Cardiac septum (tissue), 1 donor: ENCODE measurements at regions of chr6 and their contacts with region 1.

Region 1: DNA sequence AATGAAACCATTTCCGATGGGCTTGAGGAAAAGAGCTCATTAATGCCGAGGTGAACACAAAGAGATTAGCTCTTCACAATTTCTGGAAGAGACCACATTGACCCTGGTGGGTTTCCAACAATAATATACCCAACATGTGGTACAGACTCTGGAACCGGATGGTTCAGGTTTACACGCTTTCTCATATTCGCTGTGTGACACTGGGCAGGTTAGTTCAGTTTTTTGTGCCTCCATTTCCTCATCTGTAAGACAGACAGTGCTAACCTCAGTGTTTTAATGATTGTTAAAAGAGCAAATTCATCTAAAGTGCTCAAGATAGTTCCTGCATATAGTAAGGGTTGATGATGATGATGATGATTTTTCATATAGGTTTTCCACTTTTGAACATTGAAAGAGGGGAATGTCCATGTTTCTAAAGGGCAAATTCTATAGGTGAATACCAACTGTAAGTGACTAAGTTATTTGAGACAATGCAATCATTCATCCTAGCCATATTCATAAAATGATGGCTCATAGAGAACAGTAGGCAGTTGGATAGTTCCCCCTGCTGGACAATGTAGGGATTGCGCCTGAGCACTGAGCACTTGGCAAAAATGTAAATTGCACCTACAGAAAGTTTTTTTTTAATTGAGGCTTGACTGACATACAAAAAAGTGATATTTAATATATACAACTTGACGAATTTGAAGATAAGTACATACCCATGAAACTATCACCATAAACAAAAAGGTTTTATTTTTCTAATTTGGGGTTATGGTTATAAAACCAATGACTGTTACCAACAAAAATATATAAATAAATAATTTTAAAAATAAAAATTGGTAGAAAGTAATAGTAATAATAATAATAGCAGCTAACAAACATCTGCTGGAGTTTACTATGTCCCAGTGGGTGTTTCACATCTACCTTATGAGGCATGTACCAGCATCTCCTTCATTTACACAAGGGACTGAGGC is 2.1 kb upstream of the PERP start:
- DNase-seq: no peak

Region 2: DNA sequence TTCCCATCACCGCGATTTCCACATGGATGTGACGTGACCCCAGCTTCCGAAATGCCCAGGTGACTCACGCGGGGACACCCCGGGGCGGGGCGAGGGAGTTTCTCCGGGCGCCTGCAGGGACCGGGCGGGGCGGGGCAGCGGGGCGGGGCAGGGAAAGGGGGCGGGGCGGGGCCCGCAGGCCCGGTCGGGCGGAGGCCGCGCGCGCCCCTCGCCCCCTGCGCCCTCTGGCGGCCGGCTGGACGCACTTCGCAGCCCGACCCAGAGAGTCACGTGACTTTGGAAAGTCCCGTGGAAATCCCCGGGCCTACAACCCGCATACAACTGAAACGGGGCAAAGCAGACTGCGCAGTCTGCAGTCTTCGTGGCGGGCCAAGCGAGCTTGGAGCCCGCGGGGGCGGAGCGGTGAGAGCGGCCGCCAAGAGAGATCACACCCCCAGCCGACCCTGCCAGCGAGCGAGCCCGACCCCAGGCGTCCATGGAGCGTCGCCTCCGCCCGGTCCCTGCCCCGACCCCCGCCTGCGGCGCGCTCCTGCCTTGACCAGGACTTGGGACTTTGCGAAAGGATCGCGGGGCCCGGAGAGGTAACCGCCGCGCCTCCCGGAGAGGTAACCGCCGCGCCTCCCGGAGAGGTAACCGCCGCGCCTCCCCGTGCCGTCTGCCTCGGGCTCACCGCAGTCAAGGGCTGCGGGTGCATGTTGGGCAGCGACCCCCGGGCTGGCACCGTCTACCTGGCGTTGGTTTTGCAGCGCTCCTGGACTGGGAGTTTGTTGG is 242.2 kb before region 1 on chr6 and contains the start of gene TNFAIP3:
- intact Hi-C with region 1: loop called (anchors 10 kb)
- DNase-seq: peak; percentile 98
- total RNA-seq, gene TNFAIP3: 7.9 TPM

Region 3: GRCh38 chr6:138001750-138002349 is 107.5 kb before region 1 on chr6:
- intact Hi-C with region 1: loop called (anchors 1 kb)
- DNase-seq: no peak

Region 4: DNA sequence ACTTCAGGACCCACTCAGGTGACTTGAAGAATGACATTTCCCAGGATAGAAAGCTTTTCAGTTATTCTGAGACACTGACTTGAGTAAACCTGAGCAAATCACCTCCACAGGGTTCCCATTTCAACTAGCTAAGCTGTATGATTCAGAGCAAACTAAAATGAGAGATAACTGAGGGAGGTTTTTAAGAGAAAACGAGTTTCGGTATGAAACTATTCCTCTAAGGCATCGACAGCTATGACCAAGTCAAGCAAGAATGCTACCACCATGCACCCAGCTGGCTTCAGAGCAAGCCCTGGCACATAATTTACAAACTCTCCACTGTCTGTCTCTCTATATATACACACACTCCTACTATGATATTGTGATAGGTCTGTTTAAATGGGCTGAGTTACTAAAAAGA is 77.5 kb before region 1 on chr6:
- intact Hi-C with region 1: loop called (anchors 5 kb)
- DNase-seq: no peak